Posterior cingulate gyrus (tissue), 11 donors: ENCODE measurements at regions of chr16 and their contacts with region 1.

Region 1: DNA sequence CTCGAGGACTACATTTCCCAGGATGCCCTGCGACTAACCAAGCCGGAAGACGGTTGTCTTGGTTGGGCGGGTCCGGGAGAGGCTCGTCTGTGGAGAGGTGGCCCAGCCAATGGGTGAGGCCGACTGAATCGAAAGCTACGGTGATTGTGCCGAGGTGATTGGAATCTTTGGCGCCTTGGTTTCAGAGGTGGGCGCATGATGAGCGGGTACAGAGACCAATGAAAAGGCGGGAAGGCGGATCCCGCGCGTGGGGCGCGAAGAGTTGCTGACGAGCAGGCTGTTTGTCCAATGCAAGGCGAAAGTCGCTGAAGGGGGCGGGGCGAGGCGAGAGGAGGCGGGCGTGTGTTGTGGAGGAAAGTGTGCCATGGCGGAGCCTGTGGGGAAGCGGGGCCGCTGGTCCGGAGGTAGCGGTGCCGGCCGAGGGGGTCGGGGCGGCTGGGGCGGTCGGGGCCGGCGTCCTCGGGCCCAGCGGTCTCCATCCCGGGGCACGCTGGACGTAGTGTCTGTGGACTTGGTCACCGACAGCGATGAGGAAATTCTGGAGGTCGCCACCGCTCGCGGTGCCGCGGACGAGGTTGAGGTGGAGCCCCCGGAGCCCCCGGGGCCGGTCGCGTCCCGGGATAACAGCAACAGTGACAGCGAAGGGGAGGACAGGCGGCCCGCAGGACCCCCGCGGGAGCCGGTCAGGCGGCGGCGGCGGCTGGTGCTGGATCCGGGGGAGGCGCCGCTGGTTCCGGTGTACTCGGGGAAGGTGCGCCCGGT is at the start of gene NFATC2IP:
- DNase-seq: peak; percentile 99 to 100 (median 100)

Region 2: GRCh38 chr16:28553776-28554633 is 396.8 kb before region 1 on chr16 and contains the start of gene SGF29:
- intact Hi-C with region 1: loop called (anchors 5 kb)
- DNase-seq: peak; percentile 84 to 98 (median 91)

Region 3: GRCh38 chr16:28823872-28824716 is 126.7 kb before region 1 on chr16:
- intact Hi-C with region 1: loop called (anchors 5 kb)
- DNase-seq: peak; percentile 89 to 99 (median 96)

Region 4: DNA sequence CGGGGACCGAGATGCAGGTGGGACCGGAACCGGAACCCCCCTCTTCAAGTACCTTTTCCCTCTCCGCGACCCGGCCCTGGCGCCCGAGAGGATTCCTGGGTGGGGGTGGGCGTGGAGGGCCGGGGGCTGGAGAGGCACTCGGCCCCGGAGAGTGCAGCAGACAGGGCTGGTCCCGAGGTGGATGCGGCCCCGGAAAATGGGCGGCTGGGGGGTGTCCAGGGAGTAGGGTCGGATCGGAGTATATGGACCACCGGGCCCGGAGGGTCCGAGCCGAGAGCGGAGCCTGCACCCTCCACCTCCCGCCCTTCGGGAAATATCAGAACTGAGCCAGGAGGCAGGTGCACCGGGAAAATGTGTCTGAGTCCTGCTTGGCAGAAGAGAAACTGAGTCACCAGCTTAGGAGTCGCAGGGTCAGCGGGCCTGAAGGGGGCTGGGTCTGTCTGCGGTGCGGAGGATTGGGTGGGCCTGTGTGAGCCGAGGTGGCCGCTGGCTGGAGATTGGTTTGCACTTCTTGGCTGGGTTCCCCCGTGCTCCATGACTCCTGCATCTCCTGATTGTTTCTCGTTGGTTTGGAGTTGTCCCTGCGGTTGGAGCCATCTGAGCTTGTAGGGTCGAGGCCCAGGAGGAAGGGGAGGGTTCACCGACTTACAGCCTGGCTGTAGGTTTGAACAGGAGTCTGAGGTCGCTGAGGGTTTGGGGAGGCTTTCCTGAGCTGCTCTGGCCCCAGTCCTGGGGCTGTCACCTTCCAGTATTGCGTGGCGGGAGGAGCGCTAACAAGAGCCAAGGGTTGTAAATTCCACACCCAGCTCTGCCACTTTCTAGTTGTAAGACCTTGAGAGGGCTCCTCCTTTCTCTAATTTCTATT is 86.7 kb before region 1 on chr16:
- intact Hi-C with region 1: loop called (anchors 2 kb)
- DNase-seq: peak in 2 of 10 donors; percentile 21 to 78

Region 5: DNA sequence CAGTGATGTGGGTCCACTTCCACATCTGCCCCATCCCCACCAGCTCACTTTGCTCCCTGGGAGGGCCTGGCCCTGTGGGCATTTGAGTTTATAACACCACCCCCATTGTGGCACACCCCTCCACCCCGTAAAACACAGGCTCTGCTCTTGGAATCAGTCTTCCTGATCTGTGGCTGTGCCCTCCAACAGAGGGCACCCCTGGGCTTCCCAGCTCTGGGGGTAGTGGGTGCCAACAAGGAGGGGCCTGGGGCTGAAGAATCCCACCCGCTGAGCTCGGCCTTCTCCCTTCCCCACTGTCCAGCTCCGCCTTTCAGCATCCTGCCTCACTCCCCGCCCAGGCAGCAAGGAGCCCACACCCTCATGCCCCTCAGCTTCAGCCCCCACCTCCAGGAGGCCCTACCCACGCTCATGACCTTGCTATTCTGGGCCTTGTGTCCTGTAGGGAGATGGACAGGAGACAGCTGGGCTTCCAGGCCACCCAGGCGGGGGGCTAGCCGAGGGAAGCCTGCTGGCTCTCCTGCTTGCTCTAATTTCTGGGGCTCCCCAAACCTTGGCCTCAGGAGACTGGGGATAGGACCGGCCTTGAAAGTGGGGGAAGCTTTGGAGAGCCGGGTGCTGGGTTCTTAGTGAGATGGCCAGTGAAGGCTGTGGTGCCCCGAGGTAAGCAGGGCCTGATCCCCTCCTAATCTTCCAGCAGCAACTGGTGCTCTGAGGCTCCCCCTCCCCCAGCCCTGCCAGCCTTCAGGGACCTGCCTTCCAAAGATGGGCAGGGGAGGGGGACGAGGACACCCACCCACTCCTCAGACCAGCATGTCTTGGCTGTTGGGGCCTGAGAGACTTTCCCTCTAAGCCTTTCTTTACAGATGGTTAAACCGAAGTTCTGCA is 75.5 kb before region 1 on chr16:
- intact Hi-C with region 1: no loop called
- DNase-seq: peak in 1 of 10 donors; percentile 39

Region 6: GRCh38 chr16:28924732-28925385 is 26.0 kb before region 1 on chr16 and contains the start of gene RABEP2:
- intact Hi-C with region 1: loop called (anchors 2 kb)
- DNase-seq: peak; percentile 84 to 98 (median 89)